AG04450 (cell line): ENCODE measurements at regions of chr7 and their contacts with region 1.

Region 1: DNA sequence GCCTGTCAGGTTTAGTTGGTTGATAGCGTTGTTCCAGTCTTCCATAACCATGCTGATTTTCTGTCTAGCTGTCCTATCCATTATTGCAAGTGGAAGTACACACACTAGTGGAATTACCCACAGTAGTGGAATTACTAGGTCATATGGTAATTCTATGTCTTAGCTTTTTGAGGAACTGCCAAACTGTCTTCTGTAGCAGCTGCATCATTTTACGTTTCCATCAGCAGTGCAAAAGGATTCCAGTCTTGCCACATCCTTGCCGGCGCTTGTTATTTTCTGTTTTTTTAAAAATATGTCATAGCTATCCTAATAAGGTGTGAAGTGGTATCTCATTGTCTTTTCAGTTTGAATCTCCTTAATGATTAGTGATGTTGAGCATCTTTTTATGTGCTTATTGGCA is 17.2 kb upstream of the RHBDD2 start:
- DNase-seq: peak; percentile 48
- H3K4me3 ChIP-seq: no peak overlapping the region
- H3K27ac ChIP-seq: no peak overlapping the region
- H3K27me3 ChIP-seq: no peaks in the 10 kb centered on the region
- CTCF ChIP-seq: no peak

Region 2: GRCh38 chr7:75842836-75843446 is 18.7 kb before region 1 on chr7:
- CTCF ChIA-PET with region 1: interaction called, 3 read pairs
- POLR2A ChIA-PET with region 1: interaction called, 12 read pairs
- DNase-seq: peak; percentile 80
- H3K4me3 ChIP-seq: peak overlapping the region; percentile 44
- H3K27ac ChIP-seq: peak overlapping the region; percentile 84
- H3K27me3 ChIP-seq: no peaks in the 10 kb centered on the region
- CTCF ChIP-seq: 0 out of 2 replicates have a peak, but pooled peaks have one; percentile 9

Region 3: GRCh38 chr7:75966190-75966961 is 104.7 kb after region 1 on chr7:
- CTCF ChIA-PET with region 1: no interaction called
- POLR2A ChIA-PET with region 1: no interaction called
- DNase-seq: no peak
- H3K4me3 ChIP-seq: no peak overlapping the region
- H3K27ac ChIP-seq: no peak overlapping the region
- H3K27me3 ChIP-seq: no peaks in the 10 kb centered on the region
- CTCF ChIP-seq: no peak